Panc1 (cell line): ENCODE measurements at regions of chr4 and their contacts with region 1.

Region 1: GRCh38 chr4:30402276-30402675 is 317.9 kb upstream of the PCDH7 start:
- DNase-seq: no peak
- ATAC-seq: no peak
- H3K4me3 ChIP-seq: no peak overlapping the region
- H3K27ac ChIP-seq: no peak overlapping the region
- H3K4me1 ChIP-seq: no peaks in the 10 kb centered on the region
- H3K27me3 ChIP-seq: no peaks in the 10 kb centered on the region
- CTCF ChIP-seq: no peak

Region 2: DNA sequence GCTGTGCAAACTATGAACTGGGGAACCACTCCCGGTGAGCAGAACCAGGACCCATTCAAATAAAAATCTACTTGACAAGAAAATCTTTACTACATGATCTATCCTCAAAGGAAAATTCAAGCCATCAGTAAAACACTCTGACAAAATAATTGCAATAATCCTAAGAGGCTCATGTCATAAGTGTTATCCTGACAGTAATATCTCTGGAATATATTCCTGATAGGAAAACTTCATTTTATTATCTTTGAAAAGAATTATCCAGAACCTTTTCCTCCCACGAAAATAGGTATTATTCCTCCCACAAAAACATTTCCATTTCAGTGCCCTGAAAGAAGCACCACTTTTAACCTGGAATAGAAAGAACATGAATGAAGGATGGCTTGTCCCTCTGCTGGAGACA is 39.8 kb before region 1 on chr4:
- CTCF ChIA-PET with region 1: interaction called, 10 read pairs
- POLR2A ChIA-PET with region 1: no interaction called
- in situ Hi-C with region 1: no loop called
- intact Hi-C with region 1: no loop called
- DNase-seq: no peak
- ATAC-seq: no peak
- H3K4me3 ChIP-seq: no peak overlapping the region
- H3K27ac ChIP-seq: no peak overlapping the region
- H3K4me1 ChIP-seq: no peaks in the 10 kb centered on the region
- H3K27me3 ChIP-seq: no peaks in the 10 kb centered on the region
- CTCF ChIP-seq: no peak